Posterior vena cava (tissue), 2 donors: ENCODE measurements at regions of chr7 and their contacts with region 1.

Region 1: DNA sequence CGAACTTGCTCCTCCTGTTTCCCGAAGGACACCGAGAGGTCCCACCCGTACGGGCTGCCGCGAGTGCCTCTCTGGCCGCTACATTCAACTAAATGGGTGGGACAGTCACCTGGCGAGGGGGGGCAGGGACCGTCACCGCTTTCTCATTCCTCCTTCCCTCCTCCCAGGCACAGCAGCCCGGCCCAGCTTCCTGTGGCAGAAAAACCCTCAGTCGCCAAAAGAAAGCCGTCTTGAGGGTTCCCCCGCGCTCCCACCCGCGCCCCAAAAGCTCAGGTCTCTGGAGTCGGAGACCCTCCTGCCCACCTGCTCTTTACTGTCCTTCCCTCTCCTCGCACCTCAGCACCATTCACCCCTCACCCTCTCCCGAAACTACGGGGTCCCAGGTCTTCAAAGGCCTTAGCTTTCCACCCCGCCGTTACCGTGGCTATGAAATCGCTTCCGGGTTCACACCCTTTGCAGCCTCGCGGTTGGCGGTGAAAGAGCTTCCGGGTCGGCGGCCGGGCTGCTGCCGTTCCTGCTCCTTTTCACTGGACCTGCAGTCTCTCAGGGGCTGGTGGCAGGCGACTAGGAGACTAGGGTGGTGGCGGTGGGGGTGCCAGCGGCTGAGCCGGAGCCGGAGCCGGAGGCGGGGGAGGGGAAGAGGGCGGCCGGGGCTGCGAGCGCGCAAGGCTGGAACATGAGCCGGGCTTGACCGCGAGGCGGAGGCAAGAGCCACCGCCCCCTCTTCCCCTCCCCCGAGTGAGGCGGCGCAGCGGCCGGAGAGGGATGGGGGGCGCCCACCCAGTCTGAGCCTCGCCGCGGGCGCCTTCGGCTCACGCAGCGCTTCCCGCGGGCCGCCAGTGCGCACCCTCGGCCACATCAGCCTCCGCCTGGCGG is at the starts of genes ANKIB1 and KRIT1:
- DNase-seq: peak; percentile 95
- total RNA-seq, gene ANKIB1: 54.9 to 59.3 TPM
- total RNA-seq, gene KRIT1: 37.9 to 38.1 TPM

Region 2: DNA sequence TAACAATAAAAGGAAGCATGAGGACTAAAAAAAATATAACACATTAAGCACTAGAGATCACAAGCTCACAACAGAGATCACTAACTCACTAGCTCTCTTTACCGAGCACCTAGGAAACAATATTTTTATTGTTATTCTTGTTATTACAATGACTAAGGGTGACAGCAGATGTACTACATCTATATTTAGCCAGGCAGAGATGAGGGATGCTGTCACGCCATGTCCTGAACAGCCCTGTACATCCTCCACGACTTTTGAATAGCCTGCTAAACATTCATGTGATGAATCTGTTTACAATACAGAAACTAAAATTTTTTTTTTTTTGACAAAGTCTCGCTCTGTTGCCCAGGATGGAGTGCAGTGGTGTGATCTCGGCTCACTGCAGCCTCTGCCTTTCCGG is 321.7 kb after region 1 on chr7:
- intact Hi-C with region 1: loop called in 1 of 2 experiments (anchors 10 kb)
- DNase-seq: no peak